B cell (primary cell): ENCODE measurements at regions of chr10 and their contacts with region 1.

Region 1: DNA sequence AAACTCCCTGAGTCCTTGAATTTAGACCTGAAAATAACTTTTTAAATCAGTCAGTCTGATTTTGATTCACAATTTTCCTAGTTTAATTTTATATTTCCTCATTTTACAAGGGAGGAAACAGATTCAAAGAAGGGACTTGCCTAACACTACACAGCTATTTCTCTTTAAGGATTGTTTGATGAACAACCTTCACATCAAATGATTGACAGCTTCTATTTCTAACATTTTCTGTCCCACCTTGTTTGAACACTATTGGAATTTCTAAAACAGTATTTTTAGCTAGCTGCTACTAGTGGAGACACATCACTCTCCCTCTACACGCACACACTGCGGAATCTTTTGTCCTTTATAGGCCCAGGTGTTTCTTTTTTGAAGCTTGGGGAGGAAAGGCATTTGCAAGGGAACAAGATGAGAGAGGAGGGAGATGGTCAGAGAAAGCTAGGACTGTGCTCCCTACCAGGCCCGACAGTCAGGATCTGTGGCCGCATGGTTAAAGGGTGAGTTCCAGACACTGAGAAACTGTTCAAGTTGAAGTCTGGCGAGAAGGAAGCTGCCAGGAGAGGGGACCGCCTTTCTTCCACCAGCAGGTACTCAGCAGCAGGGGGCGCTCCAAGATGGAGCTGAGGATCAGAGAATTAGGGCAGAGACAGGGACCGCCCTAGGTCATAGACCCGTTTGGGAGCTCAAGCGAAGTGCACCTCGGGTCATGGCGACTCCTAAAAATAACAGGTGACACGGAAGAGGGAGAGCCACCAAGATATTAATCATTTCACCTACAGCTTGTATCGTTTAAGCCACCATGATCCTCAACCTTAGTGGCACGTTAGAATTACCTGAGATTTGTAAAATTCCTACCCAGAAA is 49.7 kb downstream of the DNAJC12 start:
- DNase-seq: peak; percentile 70
- ATAC-seq: peak; percentile 72
- H3K4me3 ChIP-seq: no peak overlapping the region
- H3K4me3 Mint-ChIP-seq: peak overlapping the region; percentile 32
- H3K27ac ChIP-seq: no peak overlapping the region
- H3K27ac Mint-ChIP-seq: no peak overlapping the region
- H3K4me1 ChIP-seq: peaks cover 20 to 25% of the 10 kb centered on the region in 2 donors
- H3K4me1 Mint-ChIP-seq: peaks cover 24% of the 10 kb centered on the region
- H3K27me3 ChIP-seq: peaks cover 0 to 3% (median 0%) of the 10 kb centered on the region in 4 experiments
- H3K27me3 Mint-ChIP-seq: peaks cover 3% of the 10 kb centered on the region
- CTCF ChIP-seq: peak; percentile 68

Region 2: GRCh38 chr10:67242528-67242927 is 545.7 kb before region 1 on chr10:
- CTCF ChIA-PET with region 1: no interaction called
- POLR2A ChIA-PET with region 1: no interaction called
- intact Hi-C with region 1: no loop called
- DNase-seq: no peak
- ATAC-seq: no peak
- H3K4me3 ChIP-seq: no peak overlapping the region
- H3K4me3 Mint-ChIP-seq: no peak overlapping the region
- H3K27ac ChIP-seq: no peak overlapping the region
- H3K27ac Mint-ChIP-seq: no peak overlapping the region
- H3K4me1 ChIP-seq: no peaks in the 10 kb centered on the region
- H3K4me1 Mint-ChIP-seq: no peaks in the 10 kb centered on the region
- H3K27me3 ChIP-seq: no peaks in the 10 kb centered on the region
- H3K27me3 Mint-ChIP-seq: no peaks in the 10 kb centered on the region
- CTCF ChIP-seq: no peak

Region 3: GRCh38 chr10:67697724-67698131 is 90.5 kb before region 1 on chr10:
- CTCF ChIA-PET with region 1: interaction called, 512 read pairs
- POLR2A ChIA-PET with region 1: no interaction called
- intact Hi-C with region 1: no loop called
- DNase-seq: peak; percentile 67
- ATAC-seq: peak; percentile 71
- H3K4me3 ChIP-seq: no peak overlapping the region
- H3K4me3 Mint-ChIP-seq: no peak overlapping the region
- H3K27ac ChIP-seq: no peak overlapping the region
- H3K27ac Mint-ChIP-seq: no peak overlapping the region
- H3K4me1 ChIP-seq: no peaks in the 10 kb centered on the region
- H3K4me1 Mint-ChIP-seq: no peaks in the 10 kb centered on the region
- H3K27me3 ChIP-seq: peaks cover 0 to 9% (median 0%) of the 10 kb centered on the region in 4 experiments
- H3K27me3 Mint-ChIP-seq: peaks cover 46% of the 10 kb centered on the region
- CTCF ChIP-seq: peak; percentile 82

Region 4: DNA sequence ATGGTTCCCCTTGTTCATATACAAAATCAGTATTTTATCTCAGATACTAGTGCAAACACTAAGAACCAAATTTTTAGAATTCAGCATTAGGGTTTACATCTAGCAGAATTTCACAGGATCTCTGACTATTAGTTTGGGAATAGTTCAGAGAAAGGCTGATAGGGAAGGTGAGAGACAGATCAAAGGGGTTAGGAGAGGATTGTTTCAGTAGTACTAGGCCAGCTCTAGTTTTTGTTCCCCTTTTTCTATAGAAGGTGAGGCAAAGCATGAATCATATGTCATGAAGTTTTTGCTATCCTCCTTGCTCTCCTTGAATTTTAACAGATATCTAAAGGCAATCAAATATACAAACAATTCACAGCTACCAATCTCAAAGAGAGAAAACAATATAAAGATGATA is 66.1 kb before region 1 on chr10:
- CTCF ChIA-PET with region 1: interaction called, 12 read pairs
- POLR2A ChIA-PET with region 1: no interaction called
- intact Hi-C with region 1: no loop called
- DNase-seq: peak; percentile 15
- ATAC-seq: no peak
- H3K4me3 ChIP-seq: no peak overlapping the region
- H3K4me3 Mint-ChIP-seq: no peak overlapping the region
- H3K27ac ChIP-seq: no peak overlapping the region
- H3K27ac Mint-ChIP-seq: no peak overlapping the region
- H3K4me1 ChIP-seq: peaks cover 0 to 3% of the 10 kb centered on the region in 2 donors
- H3K4me1 Mint-ChIP-seq: peaks cover 6% of the 10 kb centered on the region
- H3K27me3 ChIP-seq: no peaks in the 10 kb centered on the region
- H3K27me3 Mint-ChIP-seq: no peaks in the 10 kb centered on the region
- CTCF ChIP-seq: no peak

Region 5: GRCh38 chr10:67764012-67764822 is 24.0 kb before region 1 on chr10:
- CTCF ChIA-PET with region 1: interaction called, 16 read pairs
- POLR2A ChIA-PET with region 1: no interaction called
- intact Hi-C with region 1: no loop called
- DNase-seq: peak; percentile 99
- ATAC-seq: peak; percentile 77
- H3K4me3 ChIP-seq: peak overlapping the region; percentile 74 to 93 (median 92)
- H3K4me3 Mint-ChIP-seq: peak overlapping the region; percentile 91
- H3K27ac ChIP-seq: peak overlapping the region; percentile 84 to 86
- H3K27ac Mint-ChIP-seq: peak overlapping the region; percentile 100
- H3K4me1 ChIP-seq: peaks cover 9 to 20% of the 10 kb centered on the region in 2 donors
- H3K4me1 Mint-ChIP-seq: peaks cover 28% of the 10 kb centered on the region
- H3K27me3 ChIP-seq: no peaks in the 10 kb centered on the region
- H3K27me3 Mint-ChIP-seq: no peaks in the 10 kb centered on the region
- CTCF ChIP-seq: no peak

Region 6: GRCh38 chr10:67772894-67773511 is 15.3 kb before region 1 on chr10:
- CTCF ChIA-PET with region 1: interaction called, 36 read pairs
- POLR2A ChIA-PET with region 1: interaction called, 3 read pairs
- intact Hi-C with region 1: no loop called
- DNase-seq: peak; percentile 81
- ATAC-seq: peak; percentile 92
- H3K4me3 ChIP-seq: no peak overlapping the region
- H3K4me3 Mint-ChIP-seq: peak overlapping the region; percentile 64
- H3K27ac ChIP-seq: peak overlapping the region; percentile 62 to 78
- H3K27ac Mint-ChIP-seq: peak overlapping the region; percentile 89
- H3K4me1 ChIP-seq: peaks cover 41 to 45% of the 10 kb centered on the region in 2 donors
- H3K4me1 Mint-ChIP-seq: peaks cover 47% of the 10 kb centered on the region
- H3K27me3 ChIP-seq: no peaks in the 10 kb centered on the region
- H3K27me3 Mint-ChIP-seq: no peaks in the 10 kb centered on the region
- CTCF ChIP-seq: no peak

Region 7: DNA sequence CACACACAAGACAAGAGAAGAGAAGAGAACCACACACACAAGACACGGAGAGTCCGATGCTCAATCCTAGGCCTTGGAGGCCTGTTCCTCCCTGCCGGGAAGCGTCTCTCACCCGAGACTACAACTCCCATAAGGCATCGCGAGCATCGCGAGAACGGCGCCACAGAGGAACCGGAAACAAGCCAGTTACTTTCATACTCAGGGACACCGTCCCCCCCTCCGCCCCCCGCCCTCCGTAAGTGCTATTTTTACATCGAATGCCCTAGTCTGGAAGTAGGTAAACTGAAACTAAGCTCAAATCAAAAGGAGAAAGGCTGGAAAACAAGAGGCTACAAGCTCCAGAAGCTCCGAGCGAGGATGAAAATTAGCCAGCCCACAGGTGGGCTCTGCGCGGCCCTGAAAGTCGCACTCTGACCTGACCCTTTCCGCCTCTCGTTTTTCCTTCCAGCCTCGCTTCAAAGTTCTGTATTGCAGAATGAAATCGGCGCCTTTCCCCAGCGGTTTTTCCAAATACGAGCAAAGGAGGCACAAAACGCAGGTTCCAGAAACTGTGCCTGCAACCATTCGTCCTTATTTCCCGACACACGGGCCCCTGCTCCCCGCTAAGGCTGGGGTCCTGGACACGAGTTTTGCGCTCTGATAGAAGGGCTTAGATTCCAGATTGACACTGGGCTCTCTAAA is 61.2 kb after region 1 on chr10:
- CTCF ChIA-PET with region 1: interaction called, 16 read pairs
- POLR2A ChIA-PET with region 1: no interaction called
- intact Hi-C with region 1: loop called (anchors 5 kb)
- DNase-seq: peak; percentile 93
- ATAC-seq: peak; percentile 99
- H3K4me3 ChIP-seq: peak overlapping the region; percentile 79 to 98 (median 96)
- H3K4me3 Mint-ChIP-seq: peak overlapping the region; percentile 97
- H3K27ac ChIP-seq: peak overlapping the region; percentile 89 to 91
- H3K27ac Mint-ChIP-seq: peak overlapping the region; percentile 97
- H3K4me1 ChIP-seq: peaks cover 5 to 9% of the 10 kb centered on the region in 2 donors
- H3K4me1 Mint-ChIP-seq: peaks cover 8% of the 10 kb centered on the region
- H3K27me3 ChIP-seq: no peaks in the 10 kb centered on the region
- H3K27me3 Mint-ChIP-seq: no peaks in the 10 kb centered on the region
- CTCF ChIP-seq: no peak

Region 8: DNA sequence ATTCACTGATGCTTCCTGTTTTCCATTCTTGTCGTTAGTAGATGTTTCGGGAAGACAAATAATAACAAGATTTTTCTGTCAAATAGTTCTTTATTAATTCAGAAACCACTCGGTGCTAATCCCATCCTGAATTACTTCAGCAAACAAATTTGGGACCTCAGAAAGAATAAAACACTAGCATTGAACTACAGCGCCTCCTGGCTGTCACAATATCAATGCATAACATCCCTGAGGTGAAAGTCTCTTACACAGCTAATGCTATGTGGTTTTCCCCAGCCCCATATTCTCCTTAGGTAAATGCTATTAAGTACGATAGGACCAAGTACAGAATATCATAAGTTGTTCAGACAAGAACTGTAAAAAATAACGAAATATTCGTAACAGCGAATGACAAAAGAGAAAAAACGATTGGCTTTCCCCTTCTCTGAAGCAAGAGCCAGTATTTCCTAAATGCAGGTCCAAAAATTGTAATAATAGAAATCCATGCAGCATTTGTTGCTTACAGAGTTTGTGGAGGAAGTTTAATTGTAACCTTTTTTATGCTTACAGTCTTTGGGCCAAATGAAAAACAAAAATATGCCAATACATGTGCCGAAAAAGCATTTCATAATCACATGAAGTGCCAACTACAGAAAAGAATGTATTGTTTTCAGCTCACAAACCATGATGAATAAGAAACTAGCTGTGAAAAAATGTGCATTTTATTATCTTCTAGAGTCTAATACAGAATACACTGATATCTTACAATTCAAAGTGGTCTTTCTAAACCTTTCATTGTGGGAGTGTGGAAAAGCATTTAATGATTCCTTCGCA is 368.3 kb after region 1 on chr10:
- CTCF ChIA-PET with region 1: interaction called, 58 read pairs
- POLR2A ChIA-PET with region 1: no interaction called
- intact Hi-C with region 1: loop called (anchors 1 kb)
- DNase-seq: peak; percentile 74
- ATAC-seq: no peak
- H3K4me3 ChIP-seq: no peak overlapping the region
- H3K4me3 Mint-ChIP-seq: no peak overlapping the region
- H3K27ac ChIP-seq: no peak overlapping the region
- H3K27ac Mint-ChIP-seq: no peak overlapping the region
- H3K4me1 ChIP-seq: no peaks in the 10 kb centered on the region
- H3K4me1 Mint-ChIP-seq: no peaks in the 10 kb centered on the region
- H3K27me3 ChIP-seq: no peaks in the 10 kb centered on the region
- H3K27me3 Mint-ChIP-seq: peaks cover 5% of the 10 kb centered on the region
- CTCF ChIP-seq: peak; percentile 90

Region 9: GRCh38 chr10:68261132-68261856 is 473.0 kb after region 1 on chr10:
- CTCF ChIA-PET with region 1: no interaction called
- POLR2A ChIA-PET with region 1: no interaction called
- intact Hi-C with region 1: no loop called
- DNase-seq: no peak
- ATAC-seq: no peak
- H3K4me3 ChIP-seq: no peak overlapping the region
- H3K4me3 Mint-ChIP-seq: no peak overlapping the region
- H3K27ac ChIP-seq: no peak overlapping the region
- H3K27ac Mint-ChIP-seq: no peak overlapping the region
- H3K4me1 ChIP-seq: no peaks in the 10 kb centered on the region
- H3K4me1 Mint-ChIP-seq: no peaks in the 10 kb centered on the region
- H3K27me3 ChIP-seq: no peaks in the 10 kb centered on the region
- H3K27me3 Mint-ChIP-seq: peaks cover 8% of the 10 kb centered on the region
- CTCF ChIP-seq: no peak